ENCODE measurements at regions of chr10 and their contacts with region 1.

Region 1: DNA sequence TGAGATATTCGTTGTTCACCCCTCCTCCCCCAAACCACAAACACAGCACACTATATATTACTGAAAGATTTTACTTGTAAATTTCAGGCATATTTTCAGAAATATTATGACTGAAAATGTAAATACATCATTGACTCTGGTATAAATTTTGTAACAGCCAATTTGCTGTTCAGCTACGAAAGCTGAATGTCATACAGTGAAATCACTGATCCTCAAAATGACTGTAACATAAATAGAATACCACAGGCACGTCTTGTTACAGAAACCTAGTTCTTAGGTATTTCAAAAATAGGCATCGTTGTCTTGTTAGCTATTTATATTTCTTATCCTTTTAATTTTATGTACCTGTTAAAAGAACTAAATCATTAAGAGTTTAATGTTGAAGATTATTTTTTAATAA is 15.1 kb downstream of the TRUB1 start:
- DNase-seq: no peak
- H3K4me3 ChIP-seq: no peak overlapping the region
- H3K27ac ChIP-seq: no peak overlapping the region
- H3K4me1 ChIP-seq: no peaks in the 10 kb centered on the region
- H3K27me3 ChIP-seq: no peaks in the 10 kb centered on the region
- CTCF ChIP-seq: no peak
- EP300 ChIP-seq: no peak
- POLR2A ChIP-seq: no peak
- RAD21 ChIP-seq: no peak

Region 2: DNA sequence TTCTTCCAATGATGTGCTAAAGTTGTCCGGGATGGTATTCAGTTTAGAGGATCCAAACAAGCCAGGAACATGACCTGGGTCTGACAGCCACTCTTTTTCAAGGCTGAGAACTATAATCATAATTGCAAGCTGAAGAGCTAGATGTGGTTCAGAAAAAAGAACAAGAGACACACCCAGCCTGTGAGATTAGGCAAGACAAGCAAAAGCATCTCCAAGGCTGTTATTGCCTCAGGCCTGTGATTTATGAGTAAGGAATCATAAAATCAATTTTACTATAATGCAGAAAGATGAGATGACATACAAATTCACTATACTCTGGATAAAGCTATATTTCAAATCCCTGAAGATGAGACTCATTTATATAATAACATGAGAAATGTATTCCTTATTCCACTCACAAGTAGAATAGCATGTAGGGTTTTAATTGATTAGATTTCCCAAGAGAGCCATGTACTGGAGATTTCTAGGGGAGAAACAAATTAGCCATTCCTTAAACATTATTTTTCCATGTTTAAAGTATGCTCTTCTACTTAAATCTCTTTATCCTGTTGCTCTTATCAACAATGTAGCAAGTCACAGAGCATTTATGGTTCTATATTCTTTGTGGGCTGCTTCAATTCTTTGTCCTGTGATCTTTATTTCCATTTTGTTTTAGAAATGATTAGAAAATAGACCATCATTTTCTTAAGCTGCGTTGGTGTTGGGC is 84.1 kb before region 1 on chr10:
- CTCF ChIA-PET with region 1: no interaction called
- POLR2A ChIA-PET with region 1: no interaction called
- DNase-seq: no peak
- H3K4me3 ChIP-seq: no peak overlapping the region
- H3K27ac ChIP-seq: no peak overlapping the region
- H3K4me1 ChIP-seq: no peaks in the 10 kb centered on the region
- H3K27me3 ChIP-seq: no peaks in the 10 kb centered on the region
- CTCF ChIP-seq: no peak
- EP300 ChIP-seq: no peak
- POLR2A ChIP-seq: no peak
- RAD21 ChIP-seq: no peak

Region 3: DNA sequence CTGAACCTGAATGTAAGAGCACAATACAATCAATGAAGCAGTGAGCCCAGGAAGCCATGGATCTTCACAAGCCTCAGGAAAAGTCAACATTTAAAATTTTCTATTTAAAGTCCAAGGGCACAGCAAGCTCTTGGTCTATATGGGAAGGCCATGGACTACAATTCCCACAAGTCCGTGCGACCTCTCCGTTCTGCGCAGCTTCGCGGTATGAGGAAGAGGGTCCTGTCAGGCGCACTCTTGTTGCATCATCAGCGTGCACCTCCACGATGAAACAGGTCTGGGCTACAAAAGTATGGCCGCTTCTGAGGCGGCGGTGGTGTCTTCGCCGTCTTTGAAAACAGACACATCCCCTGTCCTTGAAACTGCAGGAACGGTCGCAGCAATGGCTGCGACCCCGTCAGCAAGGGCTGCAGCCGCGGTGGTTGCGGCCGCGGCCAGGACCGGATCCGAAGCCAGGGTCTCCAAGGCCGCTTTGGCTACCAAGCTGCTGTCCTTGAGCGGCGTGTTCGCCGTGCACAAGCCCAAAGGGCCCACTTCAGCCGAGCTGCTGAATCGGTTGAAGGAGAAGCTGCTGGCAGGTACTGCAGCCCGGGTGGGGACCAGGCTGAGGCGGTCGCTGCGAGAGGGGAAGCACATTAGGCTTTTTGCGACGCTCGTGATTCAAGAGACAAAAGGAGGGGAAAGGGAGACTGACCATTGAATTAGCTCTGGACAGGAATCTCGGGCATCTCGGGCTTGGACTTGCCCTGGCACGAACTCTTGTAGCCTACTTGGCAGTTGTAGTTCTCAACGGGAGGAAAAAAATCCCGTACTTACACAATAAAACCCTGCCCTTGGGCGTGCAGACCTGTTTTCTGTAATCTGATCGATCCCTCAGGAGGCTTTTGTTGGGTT is 14.8 kb before region 1 on chr10 and contains the start of gene TRUB1:
- CTCF ChIA-PET with region 1: interaction called, 9 read pairs
- POLR2A ChIA-PET with region 1: interaction called, 15 read pairs
- DNase-seq: peak; percentile 84 to 86
- H3K4me3 ChIP-seq: peak within 1 kb of the TSS; percentile 80 to 100 (median 94)
- H3K27ac ChIP-seq: peak within 1 kb of the TSS; percentile 96
- H3K4me1 ChIP-seq: no peaks in the 10 kb centered on the region; a peak in 3 of 7 replicates
- H3K27me3 ChIP-seq: no peaks in the 10 kb centered on the region
- CTCF ChIP-seq: no peak
- EP300 ChIP-seq: no peak
- POLR2A ChIP-seq: peak; percentile 85 to 88
- RAD21 ChIP-seq: no peak
- total RNA-seq, gene TRUB1: 21.2 and 22.2 TPM in 2 replicates